Heart right ventricle (tissue), 16 donors: ENCODE measurements at regions of chr10 and their contacts with region 1.

Region 1: DNA sequence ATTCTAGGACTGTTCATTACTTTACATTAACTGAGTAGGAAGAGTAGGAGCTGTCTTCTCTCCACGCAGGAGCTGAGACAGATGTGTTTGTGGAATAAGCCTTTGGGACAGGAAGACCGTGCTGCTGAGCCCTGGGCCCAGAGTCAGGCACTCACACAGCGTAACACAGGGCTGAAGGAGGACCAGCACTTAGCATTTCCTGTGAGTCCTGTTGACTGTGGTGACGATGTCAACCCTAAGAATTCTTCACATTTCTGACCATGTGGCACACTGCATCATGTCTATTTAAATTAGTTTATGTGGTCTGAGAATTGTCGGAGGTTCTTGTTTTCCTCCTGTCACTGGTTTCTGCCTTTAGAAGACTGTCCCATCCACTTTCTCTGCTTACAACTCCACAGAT is 117.2 kb downstream of the PIP4K2A start:
- DNase-seq: no peak
- ATAC-seq: peak in 3 of 8 donors; percentile 20 to 53 (median 27)
- H3K4me3 ChIP-seq: no peak overlapping the region
- H3K27ac ChIP-seq: peak overlapping the region in 1 of 10 donors; percentile 52
- H3K4me1 ChIP-seq: peaks cover 0 to 51% (median 0%) of the 10 kb centered on the region in 9 donors
- H3K27me3 ChIP-seq: no peaks in the 10 kb centered on the region
- CTCF ChIP-seq: no peak

Region 2: DNA sequence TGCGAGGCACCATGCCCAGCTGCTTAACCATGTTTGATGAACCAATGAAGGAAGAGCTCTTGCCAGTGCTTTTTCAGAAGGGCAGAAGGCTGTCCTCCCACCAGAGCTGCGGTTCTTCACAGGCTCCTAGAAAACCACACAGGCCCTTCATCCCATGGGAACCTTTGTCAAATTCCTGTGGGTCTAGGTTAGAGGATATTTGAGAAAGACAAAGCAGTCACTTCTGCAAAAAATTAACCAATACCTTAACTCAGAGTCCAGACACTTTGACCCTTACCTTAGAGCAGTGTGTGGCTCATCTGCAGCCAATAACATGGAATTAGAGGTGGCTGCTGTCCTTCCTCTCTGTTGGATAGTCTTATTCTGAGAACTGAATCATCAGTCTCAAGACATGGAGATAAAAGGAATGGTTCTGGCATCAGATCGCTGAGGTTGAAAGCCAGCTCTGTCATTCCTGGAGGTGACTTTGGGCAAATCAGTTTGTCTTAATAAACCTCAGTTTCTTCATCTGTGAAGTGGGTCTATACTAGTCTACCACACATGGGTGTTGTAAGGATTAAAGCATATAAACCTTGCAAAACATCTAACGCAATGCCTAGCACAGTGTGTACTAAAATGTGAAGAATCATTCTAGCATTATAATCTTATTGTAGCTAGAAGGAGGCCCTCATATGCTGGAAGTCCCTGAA is 182.3 kb after region 1 on chr10:
- intact Hi-C with region 1: loop called in 1 of 10 experiments (anchors 10 kb)
- DNase-seq: no peak
- ATAC-seq: peak in 5 of 8 donors; percentile 8 to 49 (median 38)
- H3K4me3 ChIP-seq: no peak overlapping the region
- H3K27ac ChIP-seq: peak overlapping the region in 1 of 10 donors; percentile 34
- H3K4me1 ChIP-seq: peaks cover 0 to 11% (median 6%) of the 10 kb centered on the region in 9 donors
- H3K27me3 ChIP-seq: no peaks in the 10 kb centered on the region
- CTCF ChIP-seq: no peak

Region 3: DNA sequence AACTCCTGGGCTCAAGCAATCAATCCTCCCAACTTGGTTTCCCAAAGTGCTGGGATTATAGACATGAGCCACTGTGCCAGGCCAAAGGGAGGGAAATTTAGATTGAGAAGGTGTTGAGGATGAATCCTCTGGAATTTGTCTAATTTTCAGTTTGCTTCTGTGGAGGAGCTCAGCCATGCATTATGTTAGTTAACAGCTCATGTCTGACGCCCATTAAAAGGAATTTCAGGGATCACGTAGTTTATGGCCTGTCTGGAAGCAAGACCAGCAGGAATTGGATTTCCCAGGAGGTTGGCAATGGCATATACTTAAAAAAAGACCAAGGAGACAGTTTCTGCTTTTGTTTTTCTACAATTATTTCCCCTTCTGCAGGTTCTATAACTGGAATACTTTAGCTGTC is 1007.5 kb after region 1 on chr10:
- intact Hi-C with region 1: loop called in 1 of 10 experiments (anchors 5 kb)
- DNase-seq: no peak
- ATAC-seq: no peak
- H3K4me3 ChIP-seq: no peak overlapping the region
- H3K27ac ChIP-seq: no peak overlapping the region
- H3K4me1 ChIP-seq: peaks cover 0 to 5% (median 0%) of the 10 kb centered on the region in 9 donors
- H3K27me3 ChIP-seq: peaks cover 0 to 3% (median 0%) of the 10 kb centered on the region in 7 donors
- CTCF ChIP-seq: no peak